ENCODE measurements at regions of chr16 and their contacts with region 1.

Region 1: GRCh38 chr16:73154063-73154870 is 106.3 kb upstream of the ZFHX3 start:
- DNase-seq: no peak
- H3K4me3 ChIP-seq: no peak overlapping the region
- H3K27me3 ChIP-seq: peaks cover 2% of the 10 kb centered on the region; the same call in 1 of the 2 replicates
- CTCF ChIP-seq: no peak

Region 2: DNA sequence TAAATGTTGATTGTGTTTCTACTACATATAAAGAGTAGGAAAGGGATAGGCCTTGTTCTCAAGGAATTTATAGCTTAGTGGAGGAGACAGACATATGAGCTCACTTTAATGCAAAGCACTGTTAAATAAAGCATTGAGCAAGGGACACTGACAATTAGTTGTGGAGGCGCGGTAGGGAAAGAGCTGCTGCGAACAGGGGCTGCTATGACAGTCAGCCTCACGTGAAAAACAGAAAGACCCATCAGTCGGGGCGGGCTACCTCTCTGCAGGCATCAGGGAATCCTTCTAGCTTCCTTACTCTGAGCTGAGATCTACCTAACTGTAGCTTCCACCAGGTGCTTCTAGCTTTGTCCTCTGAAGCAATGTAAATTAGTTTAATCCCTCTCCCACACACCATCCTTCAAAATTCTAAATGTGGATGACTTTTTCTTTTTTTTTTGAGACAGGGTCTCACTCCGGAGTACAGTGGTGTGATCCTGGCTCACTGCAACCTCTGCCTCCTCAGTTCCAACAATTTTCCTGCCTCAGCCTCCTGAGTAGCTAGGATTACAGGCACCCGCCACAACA is 23.5 kb after region 1 on chr16:
- CTCF ChIA-PET with region 1: no interaction called
- POLR2A ChIA-PET with region 1: interaction called, 16 read pairs
- DNase-seq: no peak
- H3K4me3 ChIP-seq: no peak overlapping the region
- H3K27me3 ChIP-seq: no peaks in the 10 kb centered on the region
- CTCF ChIP-seq: no peak